Endothelial cell of umbilical vein (primary cell): ENCODE measurements at regions of chr7 and their contacts with region 1.

Region 1: DNA sequence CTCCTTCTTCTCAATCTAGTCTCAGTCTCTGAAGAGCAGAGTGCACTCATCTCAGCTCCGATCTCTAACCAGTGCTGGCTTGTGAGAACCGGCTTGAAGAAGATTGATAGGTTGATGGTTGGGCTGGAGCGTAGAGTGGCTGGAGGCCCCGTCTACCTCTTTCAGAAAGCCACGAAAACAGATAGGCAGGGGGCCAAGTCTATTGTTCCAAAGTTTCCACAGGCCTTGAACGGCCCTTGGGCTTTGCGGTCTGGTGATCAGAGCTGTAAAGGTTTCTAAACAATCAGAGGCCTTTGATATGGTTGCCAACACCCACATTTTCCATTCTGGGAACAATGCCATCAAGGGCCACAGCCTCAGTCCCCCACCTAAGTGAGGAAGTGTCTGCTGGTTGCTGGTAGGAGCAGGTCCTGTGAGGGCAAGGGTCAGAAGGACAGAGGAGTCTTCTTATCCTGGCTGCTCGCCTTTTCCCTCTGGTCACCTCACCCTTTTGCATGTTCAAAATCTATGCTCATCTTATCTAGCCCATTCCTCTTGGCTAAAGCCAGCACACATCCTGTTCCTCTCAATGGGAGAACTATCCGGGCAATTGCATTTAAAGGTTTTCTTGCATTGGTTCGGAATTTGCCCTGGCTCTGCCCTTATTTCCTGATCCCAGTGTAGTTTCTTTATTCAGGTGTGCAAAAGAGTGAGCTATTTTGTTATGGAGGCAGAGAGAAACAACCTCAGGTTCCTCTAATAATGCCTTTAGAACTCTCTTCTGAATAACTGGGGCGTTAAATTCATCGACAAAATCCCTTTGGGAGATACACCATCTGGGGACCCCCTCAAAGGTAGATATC is 70.3 kb upstream of the KMT2E start:
- DNase-seq: peak; percentile 100
- H3K4me3 ChIP-seq: no peak overlapping the region
- H3K27ac ChIP-seq: peak overlapping the region; percentile 86
- H3K4me1 ChIP-seq: peaks cover 35% of the 10 kb centered on the region
- H3K27me3 ChIP-seq: no peaks in the 10 kb centered on the region
- CTCF ChIP-seq: no peak
- POLR2A ChIP-seq: no peak

Region 2: DNA sequence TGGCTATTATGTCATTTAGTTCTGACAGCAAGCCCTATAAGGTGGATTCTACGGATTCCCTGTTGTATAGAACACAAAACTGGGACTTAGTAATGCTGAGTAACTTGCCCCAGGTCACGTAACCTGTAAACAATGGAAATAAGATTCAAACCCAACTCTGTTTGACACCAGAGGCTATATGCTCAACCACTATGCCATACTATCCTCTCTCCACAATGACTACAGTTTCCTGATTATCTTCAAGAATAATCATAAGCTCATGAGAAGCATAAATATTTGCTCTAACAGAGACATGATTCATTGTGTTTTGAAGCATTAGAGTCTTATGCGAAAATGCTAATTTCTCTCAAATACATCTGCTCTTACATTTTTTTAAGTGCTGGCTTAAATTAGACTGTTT is 374.0 kb before region 1 on chr7:
- CTCF ChIA-PET with region 1: no interaction called
- POLR2A ChIA-PET with region 1: no interaction called
- dilution Hi-C with region 1: no loop called
- intact Hi-C with region 1: no loop called
- DNase-seq: no peak
- H3K4me3 ChIP-seq: no peak overlapping the region
- H3K27ac ChIP-seq: no peak overlapping the region
- H3K4me1 ChIP-seq: no peaks in the 10 kb centered on the region
- H3K27me3 ChIP-seq: no peaks in the 10 kb centered on the region
- CTCF ChIP-seq: no peak
- POLR2A ChIP-seq: no peak

Region 3: GRCh38 chr7:104862719-104863118 is 81.0 kb before region 1 on chr7:
- CTCF ChIA-PET with region 1: no interaction called
- POLR2A ChIA-PET with region 1: no interaction called
- dilution Hi-C with region 1: no loop called
- intact Hi-C with region 1: no loop called
- DNase-seq: no peak
- H3K4me3 ChIP-seq: no peak overlapping the region
- H3K27ac ChIP-seq: no peak overlapping the region
- H3K4me1 ChIP-seq: no peaks in the 10 kb centered on the region
- H3K27me3 ChIP-seq: peaks cover 0 to 17% of the 10 kb centered on the region in 2 experiments
- CTCF ChIP-seq: no peak
- POLR2A ChIP-seq: no peak

Region 4: DNA sequence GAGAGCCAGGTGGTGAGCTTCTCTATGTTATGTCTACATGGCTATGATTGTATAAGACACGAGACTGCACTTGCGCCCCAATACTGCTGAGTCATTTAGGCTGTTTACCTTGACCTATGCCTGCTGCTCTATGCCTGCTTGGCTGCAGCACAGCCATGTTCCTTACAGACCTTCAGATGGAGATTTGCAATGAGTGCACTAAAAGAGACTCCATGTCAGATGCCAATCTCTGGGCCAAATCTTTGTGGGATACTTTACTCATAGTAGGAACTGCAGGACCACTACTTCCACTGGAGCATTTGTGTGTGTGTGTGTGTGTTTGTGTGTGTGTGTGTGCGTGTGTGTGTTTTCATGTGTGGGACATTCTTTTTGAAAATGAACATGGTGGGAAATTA is 20.3 kb after region 1 on chr7:
- CTCF ChIA-PET with region 1: interaction called, 6 read pairs
- POLR2A ChIA-PET with region 1: interaction called, 6 read pairs
- dilution Hi-C with region 1: no loop called
- intact Hi-C with region 1: loop called (anchors 1 kb)
- DNase-seq: peak; percentile 97
- H3K4me3 ChIP-seq: no peak overlapping the region
- H3K27ac ChIP-seq: peak overlapping the region; percentile 85
- H3K4me1 ChIP-seq: peaks cover 28% of the 10 kb centered on the region
- H3K27me3 ChIP-seq: no peaks in the 10 kb centered on the region
- CTCF ChIP-seq: no peak
- POLR2A ChIP-seq: no peak

Region 5: DNA sequence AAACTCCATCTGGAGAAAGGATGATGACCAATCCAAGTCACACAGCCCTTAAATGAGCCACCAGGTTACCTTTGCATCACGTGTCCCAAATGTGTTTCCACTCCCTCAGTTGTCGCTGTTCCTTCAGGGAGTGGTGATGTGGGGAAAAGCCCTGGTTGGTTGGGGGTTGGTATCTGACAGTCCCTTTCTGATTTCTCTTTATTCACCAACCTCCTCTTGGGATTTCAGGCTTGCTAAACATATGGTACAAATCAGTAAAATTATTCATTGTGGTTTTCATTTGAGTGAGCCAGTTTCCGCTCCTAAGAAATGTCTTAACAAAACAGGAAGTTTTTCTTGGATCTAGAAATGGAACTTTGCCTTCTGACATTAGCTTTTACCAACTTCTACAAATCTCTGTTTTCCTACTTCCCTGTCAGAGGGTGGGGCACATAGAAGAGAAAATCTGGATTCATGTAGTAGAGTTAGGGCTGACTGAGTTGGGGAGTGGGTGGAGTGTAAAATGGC is 30.2 kb after region 1 on chr7:
- CTCF ChIA-PET with region 1: interaction called, 27 read pairs
- POLR2A ChIA-PET with region 1: no interaction called
- dilution Hi-C with region 1: no loop called
- intact Hi-C with region 1: loop called (anchors 1 kb)
- DNase-seq: peak; percentile 94
- H3K4me3 ChIP-seq: no peak overlapping the region
- H3K27ac ChIP-seq: peak overlapping the region; percentile 67
- H3K4me1 ChIP-seq: peaks cover 34% of the 10 kb centered on the region
- H3K27me3 ChIP-seq: no peaks in the 10 kb centered on the region
- CTCF ChIP-seq: no peak
- POLR2A ChIP-seq: no peak

Region 6: GRCh38 chr7:105098863-105099515 is 155.3 kb after region 1 on chr7:
- CTCF ChIA-PET with region 1: no interaction called
- POLR2A ChIA-PET with region 1: no interaction called
- dilution Hi-C with region 1: no loop called
- intact Hi-C with region 1: loop called (anchors 5 kb)
- DNase-seq: peak; percentile 38
- H3K4me3 ChIP-seq: no peak overlapping the region
- H3K27ac ChIP-seq: peak overlapping the region; percentile 60
- H3K4me1 ChIP-seq: peaks cover 24% of the 10 kb centered on the region
- H3K27me3 ChIP-seq: no peaks in the 10 kb centered on the region
- CTCF ChIP-seq: no peak
- POLR2A ChIP-seq: no peak

Region 7: GRCh38 chr7:105502173-105502572 is 558.5 kb after region 1 on chr7:
- CTCF ChIA-PET with region 1: no interaction called
- POLR2A ChIA-PET with region 1: no interaction called
- dilution Hi-C with region 1: no loop called
- intact Hi-C with region 1: no loop called
- DNase-seq: no peak
- H3K4me3 ChIP-seq: no peak overlapping the region
- H3K27ac ChIP-seq: no peak overlapping the region
- H3K4me1 ChIP-seq: peaks cover 11% of the 10 kb centered on the region
- H3K27me3 ChIP-seq: no peaks in the 10 kb centered on the region
- CTCF ChIP-seq: no peak
- POLR2A ChIP-seq: no peak